ENCODE measurements at regions of chr17 and their contacts with region 1.

Region 1: DNA sequence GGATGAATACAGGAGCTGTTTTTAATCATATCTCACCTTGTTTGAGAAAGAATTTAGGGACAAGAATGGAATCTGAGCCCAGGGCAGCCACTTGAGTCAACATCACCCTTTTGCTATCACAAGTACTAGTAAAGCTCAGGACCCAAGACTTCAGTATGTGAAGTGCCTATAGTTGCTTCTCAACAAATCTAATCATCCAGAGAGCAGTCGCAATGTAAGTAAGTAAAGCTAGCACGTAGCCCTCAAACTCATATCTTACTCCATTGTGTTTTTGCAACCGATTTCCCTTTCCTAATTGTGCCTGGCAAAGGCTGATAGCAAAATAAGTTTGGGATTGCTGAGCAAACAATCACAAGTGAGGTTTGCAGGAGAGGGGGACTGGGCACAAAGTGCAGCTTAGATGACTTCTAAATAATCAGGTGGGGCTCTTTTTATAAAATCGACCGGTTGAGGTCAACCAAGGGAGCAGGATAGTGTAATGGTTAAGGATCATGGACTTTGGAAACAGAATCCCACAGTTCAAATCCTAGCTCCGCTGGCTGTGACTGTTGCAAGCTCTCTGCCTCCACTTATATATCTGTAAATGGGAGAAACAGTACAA is 13.0 kb downstream of the TOB1 start:
- DNase-seq: peak; percentile 36 to 39
- H3K4me3 ChIP-seq: no peak overlapping the region
- H3K4me3 Mint-ChIP-seq: peak overlapping the region; percentile 64
- H3K27ac Mint-ChIP-seq: peak overlapping the region; percentile 74
- H3K4me1 ChIP-seq: peaks cover 25% of the 10 kb centered on the region
- H3K4me1 Mint-ChIP-seq: peaks cover 30% of the 10 kb centered on the region
- H3K27me3 ChIP-seq: no peaks in the 10 kb centered on the region
- H3K27me3 Mint-ChIP-seq: no peaks in the 10 kb centered on the region
- CTCF ChIP-seq: no peak

Region 2: GRCh38 chr17:50817838-50818237 is 35.3 kb before region 1 on chr17:
- CTCF ChIA-PET with region 1: no interaction called
- POLR2A ChIA-PET with region 1: no interaction called
- intact Hi-C with region 1: no loop called
- DNase-seq: peak in 1 of 2 experiments; percentile 50
- H3K4me3 ChIP-seq: no peak overlapping the region
- H3K4me3 Mint-ChIP-seq: no peak overlapping the region
- H3K27ac Mint-ChIP-seq: peak overlapping the region; percentile 1
- H3K4me1 ChIP-seq: peaks cover 9% of the 10 kb centered on the region
- H3K4me1 Mint-ChIP-seq: peaks cover 7% of the 10 kb centered on the region
- H3K27me3 ChIP-seq: no peaks in the 10 kb centered on the region
- H3K27me3 Mint-ChIP-seq: no peaks in the 10 kb centered on the region
- CTCF ChIP-seq: no peak

Region 3: GRCh38 chr17:50834429-50835300 is 18.4 kb before region 1 on chr17:
- CTCF ChIA-PET with region 1: interaction called, 12 read pairs
- POLR2A ChIA-PET with region 1: no interaction called
- intact Hi-C with region 1: no loop called
- DNase-seq: no peak
- H3K4me3 ChIP-seq: no peak overlapping the region
- H3K4me3 Mint-ChIP-seq: no peak overlapping the region
- H3K27ac Mint-ChIP-seq: no peak overlapping the region
- H3K4me1 ChIP-seq: peaks cover 10% of the 10 kb centered on the region; the same call in 1 of the 2 replicates
- H3K4me1 Mint-ChIP-seq: peaks cover 7% of the 10 kb centered on the region
- H3K27me3 ChIP-seq: no peaks in the 10 kb centered on the region
- H3K27me3 Mint-ChIP-seq: no peaks in the 10 kb centered on the region
- CTCF ChIP-seq: no peak

Region 4: DNA sequence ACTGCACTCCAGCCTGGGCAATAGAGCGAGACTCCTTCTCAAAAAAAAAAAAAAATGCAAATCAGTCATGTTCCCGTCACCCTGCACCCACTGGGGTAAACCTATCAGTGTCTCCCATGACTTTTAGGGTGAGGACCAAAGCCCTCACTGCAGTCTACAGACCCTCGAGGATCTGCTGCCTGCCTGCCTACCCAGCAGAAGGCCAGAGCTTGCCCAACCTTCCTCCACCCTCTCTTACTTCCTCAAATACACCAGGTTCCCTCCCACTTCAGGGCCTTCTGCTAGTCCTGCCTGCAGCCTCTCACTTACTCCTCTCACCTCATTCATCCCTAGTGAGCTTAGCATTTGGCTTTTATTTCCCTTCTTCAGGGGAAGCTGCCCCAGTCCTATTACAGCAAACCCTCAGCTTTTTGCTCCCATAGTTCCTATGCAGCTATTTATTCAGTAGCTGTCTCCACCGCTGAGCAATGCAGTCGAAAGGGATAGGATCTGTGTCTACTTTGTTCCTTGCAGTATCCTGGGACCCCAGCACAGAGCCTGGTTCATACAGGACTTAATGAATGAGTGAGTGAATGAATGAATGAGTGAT is 30.8 kb after region 1 on chr17:
- CTCF ChIA-PET with region 1: interaction called, 21 read pairs
- POLR2A ChIA-PET with region 1: no interaction called
- intact Hi-C with region 1: no loop called
- DNase-seq: peak; percentile 71 to 78
- H3K4me3 ChIP-seq: no peak overlapping the region
- H3K4me3 Mint-ChIP-seq: peak overlapping the region; percentile 44
- H3K27ac Mint-ChIP-seq: peak overlapping the region; percentile 96
- H3K4me1 ChIP-seq: peaks cover 47% of the 10 kb centered on the region
- H3K4me1 Mint-ChIP-seq: peaks cover 40% of the 10 kb centered on the region
- H3K27me3 ChIP-seq: no peaks in the 10 kb centered on the region
- H3K27me3 Mint-ChIP-seq: no peaks in the 10 kb centered on the region
- CTCF ChIP-seq: no peak

Region 5: GRCh38 chr17:50904521-50905459 is 51.7 kb after region 1 on chr17:
- CTCF ChIA-PET with region 1: interaction called, 26 read pairs
- POLR2A ChIA-PET with region 1: no interaction called
- intact Hi-C with region 1: no loop called
- DNase-seq: peak; percentile 83 to 86
- H3K4me3 ChIP-seq: peak overlapping the region; percentile 11
- H3K4me3 Mint-ChIP-seq: peak overlapping the region; percentile 51
- H3K27ac Mint-ChIP-seq: peak overlapping the region; percentile 87
- H3K4me1 ChIP-seq: peaks cover 48% of the 10 kb centered on the region
- H3K4me1 Mint-ChIP-seq: peaks cover 46% of the 10 kb centered on the region
- H3K27me3 ChIP-seq: no peaks in the 10 kb centered on the region
- H3K27me3 Mint-ChIP-seq: no peaks in the 10 kb centered on the region
- CTCF ChIP-seq: peak; percentile 1 to 26

Region 6: DNA sequence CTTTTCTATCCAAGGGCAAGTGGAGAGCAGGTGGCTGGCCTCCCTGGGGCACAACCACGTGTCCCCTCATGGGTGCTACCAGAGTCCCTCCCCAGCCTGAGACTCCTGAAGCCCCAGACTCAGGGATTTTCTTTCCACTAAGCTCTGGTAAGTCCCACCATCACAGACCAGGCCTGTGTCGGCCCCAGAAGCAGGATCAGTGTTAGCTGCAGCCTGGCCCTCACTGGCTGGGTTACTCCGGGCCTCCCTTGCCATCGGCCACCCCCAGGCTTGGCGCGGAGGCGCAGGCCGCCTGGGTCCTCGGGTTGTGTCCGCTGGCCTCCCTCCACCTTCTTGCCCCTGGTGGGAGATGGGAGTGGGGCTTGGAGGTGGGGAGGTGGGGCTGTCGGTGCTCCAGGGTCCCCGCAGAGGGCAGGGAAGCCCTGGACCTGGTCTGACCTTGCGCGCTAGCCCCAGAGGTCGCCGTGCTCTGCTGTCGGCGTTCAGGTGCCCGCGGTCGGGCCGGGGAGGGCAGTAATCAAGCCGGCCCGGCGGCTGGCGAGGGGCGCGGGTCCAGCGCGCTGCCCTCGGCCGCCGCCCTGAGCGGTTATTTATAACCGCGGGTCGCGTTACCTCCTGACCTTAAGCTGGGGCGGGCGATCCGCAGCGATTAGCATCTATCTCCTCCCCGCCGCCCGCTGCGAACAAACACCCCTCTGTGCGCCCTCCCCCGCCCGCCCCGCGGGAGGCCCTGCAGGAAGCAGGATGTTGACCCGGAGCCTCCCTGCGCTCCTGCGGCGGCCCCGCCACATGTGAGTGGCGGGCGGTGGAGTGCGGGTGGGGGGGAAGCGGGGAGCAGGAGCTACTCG is 91.2 kb after region 1 on chr17:
- CTCF ChIA-PET with region 1: interaction called, 84 read pairs
- POLR2A ChIA-PET with region 1: interaction called, 13 read pairs
- intact Hi-C with region 1: no loop called
- DNase-seq: peak; percentile 96 to 98
- H3K4me3 ChIP-seq: peak overlapping the region; percentile 52
- H3K4me3 Mint-ChIP-seq: peak overlapping the region; percentile 73
- H3K27ac Mint-ChIP-seq: peak overlapping the region; percentile 59
- H3K4me1 ChIP-seq: peaks cover 27% of the 10 kb centered on the region
- H3K4me1 Mint-ChIP-seq: peaks cover 29% of the 10 kb centered on the region
- H3K27me3 ChIP-seq: no peaks in the 10 kb centered on the region
- H3K27me3 Mint-ChIP-seq: no peaks in the 10 kb centered on the region
- CTCF ChIP-seq: peak; percentile 53 to 60

Region 7: GRCh38 chr17:50956750-50957523 is 103.8 kb after region 1 on chr17:
- CTCF ChIA-PET with region 1: interaction called, 186 read pairs
- POLR2A ChIA-PET with region 1: interaction called, 14 read pairs
- intact Hi-C with region 1: loop called (anchors 1 kb)
- DNase-seq: peak; percentile 86 to 87
- H3K4me3 ChIP-seq: no peak overlapping the region
- H3K4me3 Mint-ChIP-seq: no peak overlapping the region
- H3K27ac Mint-ChIP-seq: no peak overlapping the region
- H3K4me1 ChIP-seq: peaks cover 9% of the 10 kb centered on the region
- H3K4me1 Mint-ChIP-seq: peaks cover 13% of the 10 kb centered on the region
- H3K27me3 ChIP-seq: no peaks in the 10 kb centered on the region
- H3K27me3 Mint-ChIP-seq: no peaks in the 10 kb centered on the region
- CTCF ChIP-seq: peak; percentile 96 to 98

Measured in Caco-2 (cell line).